IMR-90 (cell line): ENCODE measurements at regions of chr13 and their contacts with region 1.

Region 1: GRCh38 chr13:26985285-26985878 is 186.2 kb downstream of the USP12 start:
- DNase-seq: peak; percentile 80
- ATAC-seq: peak; percentile 75
- H3K4me3 ChIP-seq: no peak overlapping the region
- H3K27ac ChIP-seq: no peak overlapping the region
- H3K4me1 ChIP-seq: peaks cover 16% of the 10 kb centered on the region
- H3K27me3 ChIP-seq: no peaks in the 10 kb centered on the region
- CTCF ChIP-seq: peak; percentile 92
- POLR2A ChIP-seq: peak; percentile 75
- RAD21 ChIP-seq: peak; percentile 99

Region 2: DNA sequence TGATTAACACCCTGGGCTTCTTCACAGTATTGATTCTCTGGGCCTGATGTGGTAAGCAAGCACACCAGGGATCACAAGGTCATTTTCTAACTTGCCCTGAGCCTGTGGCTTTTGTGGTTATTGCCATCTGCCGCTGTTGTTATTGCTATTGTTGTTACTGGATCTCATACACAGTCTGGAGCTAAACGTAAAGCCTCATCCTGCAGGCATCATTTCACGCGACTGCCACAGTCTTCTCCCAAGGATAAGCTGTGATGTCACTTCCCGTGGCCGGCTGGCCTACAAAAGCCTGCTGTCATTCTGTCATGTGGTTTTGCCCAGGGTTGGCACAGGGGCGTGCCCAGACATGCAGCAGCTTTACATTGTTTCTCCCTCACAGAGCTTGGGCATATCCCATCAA is 70.8 kb before region 1 on chr13:
- CTCF ChIA-PET with region 1: no interaction called
- POLR2A ChIA-PET with region 1: no interaction called
- dilution Hi-C with region 1: no loop called
- in situ Hi-C with region 1: no loop called
- intact Hi-C with region 1: no loop called
- DNase-seq: no peak
- ATAC-seq: no peak
- H3K4me3 ChIP-seq: no peak overlapping the region
- H3K27ac ChIP-seq: no peak overlapping the region
- H3K4me1 ChIP-seq: no peaks in the 10 kb centered on the region
- H3K27me3 ChIP-seq: peaks cover 31% of the 10 kb centered on the region
- CTCF ChIP-seq: no peak
- POLR2A ChIP-seq: no peak
- RAD21 ChIP-seq: no peak

Region 3: DNA sequence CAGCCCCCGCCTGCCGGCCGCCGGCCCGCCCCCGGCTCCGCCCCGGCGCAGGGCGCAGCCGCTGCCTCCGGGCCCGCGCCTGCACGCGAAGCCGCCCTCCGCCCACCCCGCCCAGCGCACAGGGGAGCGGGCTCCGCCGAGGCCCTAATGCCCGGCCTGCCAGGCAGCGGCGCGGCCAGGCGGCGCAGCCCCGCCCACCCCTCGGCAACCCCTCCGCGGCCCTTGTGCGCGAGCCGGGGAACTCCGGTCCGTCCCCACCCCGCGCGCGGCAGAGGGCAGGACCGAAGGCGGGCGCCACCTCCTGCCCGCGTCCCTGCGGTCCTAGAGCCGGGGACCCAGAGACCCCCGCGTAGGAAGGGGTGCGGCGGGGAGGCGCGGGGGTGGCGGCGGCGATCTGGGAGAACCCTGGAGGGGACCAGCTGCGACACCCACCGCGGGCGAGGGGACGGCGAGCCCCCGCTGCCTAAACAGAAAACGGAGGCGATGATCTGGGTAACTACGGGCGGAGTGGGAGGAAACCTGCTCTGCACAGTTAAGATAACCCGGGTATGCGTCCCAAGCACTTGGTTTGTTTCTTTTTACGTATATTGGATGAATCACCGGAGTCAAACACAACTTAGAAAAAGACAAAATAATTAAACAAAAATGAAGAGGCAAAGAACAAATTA is 186.6 kb after region 1 on chr13:
- CTCF ChIA-PET with region 1: no interaction called
- POLR2A ChIA-PET with region 1: no interaction called
- dilution Hi-C with region 1: no loop called
- in situ Hi-C with region 1: loop called (anchors 10 kb)
- intact Hi-C with region 1: loop called (anchors 2 kb)
- DNase-seq: peak; percentile 90
- ATAC-seq: peak; percentile 93
- H3K4me3 ChIP-seq: peak overlapping the region; percentile 64
- H3K27ac ChIP-seq: peak overlapping the region; percentile 95
- H3K4me1 ChIP-seq: peaks cover 12% of the 10 kb centered on the region
- H3K27me3 ChIP-seq: no peaks in the 10 kb centered on the region
- CTCF ChIP-seq: 0 out of 2 replicates have a peak, but pooled peaks have one; percentile 11
- POLR2A ChIP-seq: peak; percentile 61
- RAD21 ChIP-seq: 0 out of 2 replicates have a peak, but pooled peaks have one; percentile 6

Region 4: DNA sequence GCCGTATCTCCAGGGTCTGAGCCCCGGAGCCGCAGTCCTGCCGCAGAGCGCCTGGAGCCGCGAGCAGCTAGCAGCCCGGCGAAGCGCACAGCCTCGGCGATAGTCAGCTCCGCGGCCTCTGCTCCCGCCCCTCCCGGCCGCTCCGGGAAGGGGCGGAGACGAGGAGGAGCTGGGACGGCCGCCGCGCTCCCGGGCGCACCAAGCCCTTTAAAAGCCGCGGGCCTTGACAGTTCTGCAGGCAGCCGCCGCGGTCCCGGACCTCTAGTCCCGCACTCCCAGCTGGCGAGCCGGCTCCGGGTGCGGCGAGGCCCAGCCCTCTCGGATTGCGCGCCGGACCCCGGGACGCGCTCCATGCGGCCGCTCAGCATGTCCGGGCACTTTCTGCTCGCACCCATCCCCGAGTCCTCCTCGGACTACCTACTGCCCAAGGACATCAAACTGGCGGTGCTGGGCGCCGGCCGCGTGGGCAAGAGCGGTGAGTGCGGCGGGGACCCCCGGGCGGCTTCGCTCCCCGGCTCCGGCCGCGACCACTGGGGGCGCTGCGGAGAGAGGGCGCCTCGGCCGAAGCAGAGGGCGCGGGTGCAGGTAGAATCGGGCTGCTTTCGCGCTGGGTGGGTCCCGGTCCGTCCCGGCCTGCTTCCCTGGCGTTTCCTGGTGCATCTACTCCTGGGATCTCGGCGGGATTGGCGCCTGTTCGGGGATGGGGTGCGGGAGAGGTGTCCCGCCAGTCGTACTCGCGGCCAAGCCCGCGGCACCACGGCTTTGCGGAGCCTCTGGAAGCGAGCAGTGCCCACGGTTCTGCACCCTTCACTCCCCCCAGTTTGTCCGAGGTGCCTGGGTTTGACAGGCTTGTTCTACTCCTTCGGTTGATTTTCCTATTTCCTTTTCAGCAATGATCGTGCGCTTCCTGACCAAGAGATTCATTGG is 285.5 kb after region 1 on chr13 and contains the start of gene RASL11A:
- CTCF ChIA-PET with region 1: no interaction called
- POLR2A ChIA-PET with region 1: no interaction called
- dilution Hi-C with region 1: no loop called
- in situ Hi-C with region 1: loop called (anchors 10 kb)
- intact Hi-C with region 1: loop called (anchors 2 kb)
- DNase-seq: peak; percentile 87
- ATAC-seq: peak; percentile 93
- H3K4me3 ChIP-seq: peak within 1 kb of the TSS; percentile 89
- H3K27ac ChIP-seq: peak within 1 kb of the TSS; percentile 94
- H3K4me1 ChIP-seq: peaks cover 17% of the 10 kb centered on the region
- H3K27me3 ChIP-seq: no peaks in the 10 kb centered on the region
- CTCF ChIP-seq: peak; percentile 68
- POLR2A ChIP-seq: peak; percentile 97
- RAD21 ChIP-seq: peak; percentile 32
- total RNA-seq, gene RASL11A: 15.3 and 18.5 TPM in 2 replicates

Region 5: DNA sequence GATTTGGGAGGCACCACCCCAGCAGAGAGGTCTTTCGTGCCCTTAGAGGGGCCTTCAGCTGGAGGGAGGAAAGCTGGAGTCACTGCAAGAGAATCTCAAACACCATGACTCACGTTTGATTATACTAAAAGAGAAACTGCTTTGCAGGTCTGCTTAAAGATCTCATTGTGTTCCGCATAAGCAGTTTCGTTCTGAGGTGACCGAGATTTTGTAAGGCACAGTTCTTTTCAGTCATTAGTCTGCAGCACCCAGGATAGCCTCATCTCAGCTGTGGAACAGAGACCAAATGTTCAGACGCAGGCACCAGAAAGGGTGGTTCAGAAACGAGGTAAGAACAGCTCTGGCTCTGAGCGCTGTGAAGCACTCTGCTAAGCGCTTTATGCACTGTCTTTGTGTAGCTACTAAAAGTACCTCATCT is 367.8 kb after region 1 on chr13:
- CTCF ChIA-PET with region 1: interaction called, 28 read pairs
- POLR2A ChIA-PET with region 1: no interaction called
- dilution Hi-C with region 1: no loop called
- in situ Hi-C with region 1: loop called (anchors 5 kb)
- intact Hi-C with region 1: no loop called
- DNase-seq: peak; percentile 88
- ATAC-seq: peak; percentile 84
- H3K4me3 ChIP-seq: peak overlapping the region; percentile 27
- H3K27ac ChIP-seq: peak overlapping the region; percentile 94
- H3K4me1 ChIP-seq: peaks cover 28% of the 10 kb centered on the region
- H3K27me3 ChIP-seq: no peaks in the 10 kb centered on the region
- CTCF ChIP-seq: no peak
- POLR2A ChIP-seq: no peak
- RAD21 ChIP-seq: peak; percentile 9; the same call in 1 of the 2 replicates

Region 6: GRCh38 chr13:27424246-27425157 is 439.1 kb after region 1 on chr13 and contains the start of gene GTF3A:
- CTCF ChIA-PET with region 1: no interaction called
- POLR2A ChIA-PET with region 1: no interaction called
- dilution Hi-C with region 1: no loop called
- in situ Hi-C with region 1: no loop called
- intact Hi-C with region 1: loop called (anchors 10 kb)
- DNase-seq: peak; percentile 82
- ATAC-seq: peak; percentile 92
- H3K4me3 ChIP-seq: peak within 1 kb of the TSS; percentile 57
- H3K27ac ChIP-seq: peak within 1 kb of the TSS; percentile 81
- H3K4me1 ChIP-seq: peaks cover 15% of the 10 kb centered on the region
- H3K27me3 ChIP-seq: peaks cover 2% of the 10 kb centered on the region; the same call in 1 of the 2 replicates
- CTCF ChIP-seq: no peak
- POLR2A ChIP-seq: peak; percentile 51; the same call in 1 of the 2 replicates
- RAD21 ChIP-seq: no peak
- total RNA-seq, gene GTF3A: 116 and 148 TPM in 2 replicates

Region 7: DNA sequence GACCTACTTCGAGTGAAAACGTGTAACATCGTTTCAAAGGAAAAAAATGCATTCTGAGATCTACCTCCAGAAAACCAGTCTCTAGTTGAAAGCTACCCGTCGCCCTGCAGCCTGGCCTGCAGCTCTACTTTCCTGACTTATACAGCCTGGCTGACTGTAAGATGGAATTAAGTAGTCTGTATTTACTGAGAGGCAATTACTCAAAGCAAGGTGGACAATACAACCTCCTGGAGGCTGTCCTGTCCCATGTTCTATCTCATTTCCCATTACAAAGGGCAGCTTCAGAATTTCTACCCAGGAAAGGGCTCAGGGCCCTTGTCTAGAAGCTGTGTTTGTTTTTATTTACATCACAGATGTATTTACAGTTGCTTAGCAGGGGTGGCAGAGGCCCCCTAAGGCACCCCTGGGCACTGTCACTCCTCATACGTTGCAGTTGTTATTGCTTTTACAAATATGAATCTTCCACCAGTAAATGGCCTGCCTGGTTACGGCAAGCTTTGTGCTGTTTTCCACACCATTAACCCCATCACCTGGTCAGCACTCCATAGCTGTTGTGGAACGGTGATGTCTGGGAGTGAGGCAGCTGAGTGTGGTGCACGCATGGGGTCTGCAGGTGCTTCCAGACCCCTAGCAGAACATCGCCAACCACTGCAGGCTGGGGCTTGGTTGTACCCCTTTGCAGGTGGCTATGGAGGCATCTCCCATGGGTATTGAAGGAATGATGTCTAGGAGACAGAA is 511.3 kb after region 1 on chr13:
- CTCF ChIA-PET with region 1: no interaction called
- POLR2A ChIA-PET with region 1: no interaction called
- dilution Hi-C with region 1: no loop called
- in situ Hi-C with region 1: no loop called
- intact Hi-C with region 1: no loop called
- DNase-seq: no peak
- ATAC-seq: no peak
- H3K4me3 ChIP-seq: no peak overlapping the region
- H3K27ac ChIP-seq: no peak overlapping the region
- H3K4me1 ChIP-seq: no peaks in the 10 kb centered on the region
- H3K27me3 ChIP-seq: peaks cover 6% of the 10 kb centered on the region
- CTCF ChIP-seq: no peak
- POLR2A ChIP-seq: no peak
- RAD21 ChIP-seq: no peak

Region 8: DNA sequence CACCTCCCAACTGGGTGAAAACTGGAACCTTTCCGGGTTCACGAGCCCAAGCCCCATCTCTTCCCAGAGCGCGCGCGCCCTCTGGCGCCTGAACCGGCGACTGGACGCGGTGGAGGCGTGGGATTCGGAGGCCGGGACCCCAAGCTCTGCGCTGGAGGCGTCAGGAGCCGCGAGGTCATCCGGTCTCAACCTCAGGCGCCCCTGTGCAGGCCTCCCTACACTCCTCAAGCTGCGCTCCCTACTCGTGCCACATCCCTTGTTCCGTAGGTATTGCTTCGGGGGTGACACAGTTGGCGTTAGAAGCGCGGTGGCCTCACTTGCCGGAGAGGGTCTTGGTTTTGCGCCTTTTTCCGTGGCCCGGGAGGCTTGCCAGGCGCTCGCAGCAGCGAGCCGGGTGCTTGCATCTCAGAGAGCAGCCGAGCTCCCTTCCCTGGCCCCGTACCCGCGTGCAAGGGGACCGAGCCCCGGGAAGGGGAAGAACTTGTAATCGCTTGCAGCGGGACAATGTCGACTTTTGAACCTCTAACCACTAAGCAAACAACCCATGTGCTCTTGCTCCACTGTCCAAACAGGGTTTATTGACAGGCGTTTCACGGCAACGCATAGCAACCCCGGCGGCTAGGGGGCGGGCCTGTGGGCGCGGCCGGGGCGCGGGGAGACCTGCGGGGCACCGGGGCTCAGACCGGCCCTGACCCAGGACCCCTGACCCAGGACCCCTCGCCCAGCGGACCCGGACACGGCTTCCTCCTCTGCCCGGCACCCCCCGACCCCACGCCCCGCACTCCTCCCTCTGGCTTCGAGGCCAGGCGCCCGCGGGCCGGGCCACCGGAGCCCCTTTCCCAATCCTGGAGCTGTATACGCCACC is 975.2 kb after region 1 on chr13:
- CTCF ChIA-PET with region 1: no interaction called
- POLR2A ChIA-PET with region 1: no interaction called
- dilution Hi-C with region 1: no loop called
- in situ Hi-C with region 1: no loop called
- intact Hi-C with region 1: no loop called
- DNase-seq: no peak
- ATAC-seq: peak; percentile 52
- H3K4me3 ChIP-seq: no peak overlapping the region
- H3K27ac ChIP-seq: no peak overlapping the region
- H3K4me1 ChIP-seq: peaks cover 3% of the 10 kb centered on the region; the same call in 1 of the 2 replicates
- H3K27me3 ChIP-seq: peaks cover 87% of the 10 kb centered on the region
- CTCF ChIP-seq: peak; percentile 25; the same call in 1 of the 2 replicates
- POLR2A ChIP-seq: no peak
- RAD21 ChIP-seq: no peak

Region 9: GRCh38 chr13:27980280-27980998 is 995.1 kb after region 1 on chr13:
- CTCF ChIA-PET with region 1: no interaction called
- POLR2A ChIA-PET with region 1: no interaction called
- dilution Hi-C with region 1: no loop called
- in situ Hi-C with region 1: no loop called
- intact Hi-C with region 1: loop called (anchors 10 kb)
- DNase-seq: no peak
- ATAC-seq: no peak
- H3K4me3 ChIP-seq: no peak overlapping the region
- H3K27ac ChIP-seq: no peak overlapping the region
- H3K4me1 ChIP-seq: no peaks in the 10 kb centered on the region; the same call in 1 of the 2 replicates
- H3K27me3 ChIP-seq: peaks cover 77% of the 10 kb centered on the region
- CTCF ChIP-seq: no peak
- POLR2A ChIP-seq: no peak
- RAD21 ChIP-seq: no peak

Region 10: DNA sequence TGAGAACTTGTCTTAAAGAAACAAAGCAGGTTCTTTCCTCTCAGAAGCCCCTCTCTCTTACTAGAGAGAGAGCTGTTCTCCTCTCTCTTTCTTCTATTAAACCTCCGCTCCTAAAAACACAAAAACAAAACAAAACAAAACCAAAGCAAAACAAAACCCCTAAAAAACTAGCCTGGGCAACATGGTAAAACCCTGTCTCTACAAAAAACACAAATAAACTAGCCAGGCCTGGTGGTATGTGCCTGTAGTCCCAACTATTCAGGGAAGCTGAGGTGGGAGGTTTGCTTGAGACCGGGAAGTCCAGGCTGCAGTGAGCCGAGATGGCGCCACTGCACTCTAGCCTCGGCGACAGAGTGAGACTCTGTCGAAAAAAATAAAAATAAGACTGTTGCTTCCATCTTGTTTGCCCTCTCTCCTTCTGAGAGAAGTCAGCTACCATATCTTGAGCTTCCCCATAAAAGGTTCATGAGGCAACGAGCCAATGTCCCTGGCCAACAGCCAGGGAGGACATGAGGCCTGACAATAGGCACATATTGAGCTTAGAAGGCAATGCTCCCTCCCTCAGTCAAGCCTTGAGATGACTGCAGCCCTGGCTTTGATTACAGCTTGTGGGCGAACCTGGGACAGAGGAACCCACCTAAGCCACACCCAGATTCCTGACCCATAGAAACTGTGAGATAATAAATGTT is 1132.5 kb after region 1 on chr13:
- CTCF ChIA-PET with region 1: no interaction called
- POLR2A ChIA-PET with region 1: no interaction called
- dilution Hi-C with region 1: no loop called
- in situ Hi-C with region 1: no loop called
- intact Hi-C with region 1: no loop called
- DNase-seq: no peak
- ATAC-seq: no peak
- H3K4me3 ChIP-seq: no peak overlapping the region
- H3K27ac ChIP-seq: no peak overlapping the region
- H3K4me1 ChIP-seq: no peaks in the 10 kb centered on the region
- H3K27me3 ChIP-seq: peaks cover 8% of the 10 kb centered on the region
- CTCF ChIP-seq: no peak
- POLR2A ChIP-seq: no peak
- RAD21 ChIP-seq: no peak